ENCODE measurements at regions of chr6 and their contacts with region 1.

Region 1: DNA sequence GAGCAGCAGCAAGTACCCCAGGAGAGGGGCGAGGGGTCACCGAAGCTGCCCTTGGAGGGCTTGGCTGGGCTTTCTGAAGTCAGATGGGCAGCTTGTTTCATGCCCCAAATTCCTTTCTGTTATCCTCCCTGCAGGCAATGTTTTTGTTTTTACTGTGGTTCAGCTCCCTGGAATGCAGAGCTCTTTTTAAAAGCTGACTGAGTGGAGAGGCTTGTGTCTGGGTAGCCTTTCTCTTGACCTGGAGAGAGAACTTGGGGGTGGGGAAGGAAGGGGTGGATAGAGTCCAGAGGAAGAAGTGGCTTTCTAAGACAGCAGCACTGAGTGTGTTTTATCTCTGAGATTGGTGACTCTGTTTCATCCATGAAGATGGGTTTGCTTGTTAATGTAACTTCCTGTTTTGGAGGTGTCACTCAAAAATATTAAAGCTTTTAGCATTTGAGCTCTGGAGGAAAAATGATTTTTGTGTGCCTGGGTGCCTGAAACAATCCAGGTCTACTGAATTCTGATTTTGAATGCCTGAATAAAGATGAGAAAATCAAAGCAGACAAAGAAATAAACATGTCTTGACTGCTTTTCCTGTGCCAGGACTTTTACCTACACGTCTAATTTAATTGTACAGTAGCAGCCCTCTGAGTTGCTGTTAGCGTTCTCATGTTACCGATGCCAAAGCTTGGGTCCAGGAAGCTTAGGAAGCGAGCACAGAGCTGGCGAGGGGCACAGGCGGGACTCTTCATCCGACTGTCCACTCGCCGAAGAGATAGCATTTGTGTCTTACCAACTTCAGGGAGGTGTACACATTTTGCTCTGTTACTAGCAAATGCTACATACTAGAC is 78.2 kb upstream of the EEF1E1 start:
- DNase-seq: peak; percentile 42 to 54
- H3K4me3 ChIP-seq: no peak overlapping the region
- H3K27ac ChIP-seq: no peak overlapping the region
- H3K4me1 ChIP-seq: peaks cover 14% of the 10 kb centered on the region
- H3K27me3 ChIP-seq: no peaks in the 10 kb centered on the region
- CTCF ChIP-seq: no peak

Region 2: GRCh38 chr6:8131256-8131897 is 49.2 kb before region 1 on chr6:
- CTCF ChIA-PET with region 1: interaction called, 7 read pairs
- POLR2A ChIA-PET with region 1: no interaction called
- intact Hi-C with region 1: loop called (anchors 1 kb)
- DNase-seq: peak; percentile 45 to 58
- H3K4me3 ChIP-seq: no peak overlapping the region
- H3K27ac ChIP-seq: no peak overlapping the region
- H3K4me1 ChIP-seq: peaks cover 3% of the 10 kb centered on the region; the same call in 1 of the 2 replicates
- H3K27me3 ChIP-seq: no peaks in the 10 kb centered on the region
- CTCF ChIP-seq: peak; percentile 69

Region 3: DNA sequence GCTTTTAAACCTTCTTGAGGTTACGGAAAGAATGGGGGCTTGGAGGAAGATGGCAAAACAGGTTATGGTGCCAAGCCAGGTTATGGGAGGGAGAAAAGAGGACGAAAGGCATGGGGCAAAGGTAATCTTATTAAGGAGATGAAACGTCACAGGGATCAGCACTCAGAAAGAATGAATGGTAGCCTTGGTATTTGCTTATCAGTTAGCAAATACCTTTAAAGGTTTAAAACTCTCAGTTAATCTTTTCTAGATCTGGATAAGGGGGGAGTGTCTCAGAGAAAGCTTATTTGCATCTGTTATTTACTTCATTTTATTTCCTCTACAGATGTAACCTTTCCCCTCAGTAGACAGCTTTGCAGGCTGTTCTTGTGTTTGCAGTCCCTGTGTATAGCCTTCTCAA is 22.7 kb before region 1 on chr6:
- CTCF ChIA-PET with region 1: no interaction called
- POLR2A ChIA-PET with region 1: no interaction called
- intact Hi-C with region 1: loop called (anchors 2 kb)
- DNase-seq: peak; percentile 41 to 80
- H3K4me3 ChIP-seq: no peak overlapping the region
- H3K27ac ChIP-seq: peak overlapping the region; percentile 22; the same call in 1 of the 2 replicates
- H3K4me1 ChIP-seq: 0 out of 2 replicates have a peak, but pooled peaks cover 4% of the 10 kb centered on the region
- H3K27me3 ChIP-seq: no peaks in the 10 kb centered on the region
- CTCF ChIP-seq: no peak

Measured in PC-9 (cell line).